Endothelial cell of umbilical vein (primary cell): ENCODE measurements at regions of chr3 and their contacts with region 1.

Region 1: DNA sequence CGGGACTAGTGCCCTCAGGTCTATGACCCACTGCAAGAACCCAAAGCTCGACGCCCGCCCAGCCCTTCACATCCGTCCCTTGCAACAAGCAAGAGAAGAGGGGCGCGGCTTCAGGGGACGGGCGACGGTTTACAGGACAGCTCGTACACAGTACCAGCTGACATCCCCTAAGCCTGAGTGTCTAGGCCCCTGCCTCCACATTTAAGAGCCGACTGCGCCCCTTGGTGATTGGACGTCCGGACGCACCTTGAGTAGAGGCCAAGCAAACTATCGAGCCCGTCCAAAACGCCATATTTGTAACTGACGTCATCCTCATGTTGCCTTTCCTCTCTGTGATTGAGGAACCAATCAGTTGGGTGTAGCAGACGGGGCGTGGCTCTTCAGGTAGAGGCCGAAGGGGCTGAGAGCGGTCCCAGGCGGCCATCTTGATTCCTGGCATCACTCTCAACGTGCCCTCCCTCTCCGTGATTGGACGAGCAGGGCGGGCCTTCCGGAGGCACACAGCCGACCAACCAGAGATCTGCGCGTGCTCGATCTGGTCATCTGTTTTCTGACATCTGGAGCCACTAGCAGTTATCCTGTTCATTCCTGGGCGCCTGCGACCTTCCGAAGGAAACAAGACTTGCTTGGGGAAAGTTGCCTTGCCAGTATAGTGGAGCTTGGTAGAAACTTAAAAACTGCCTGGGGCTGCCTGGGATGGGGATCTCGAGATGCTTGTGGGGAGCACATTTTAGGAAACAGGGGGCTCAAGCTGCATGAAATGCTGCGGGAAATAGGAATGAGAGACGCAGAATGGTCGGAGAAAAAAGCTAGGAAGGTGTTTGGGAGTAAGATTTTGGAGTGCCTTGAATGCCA is 4.0 kb upstream of the RPL14 start:
- DNase-seq: peak; percentile 99
- H3K4me3 ChIP-seq: peak overlapping the region; percentile 42 to 82 (median 73)
- H3K27ac ChIP-seq: peak overlapping the region; percentile 50
- H3K4me1 ChIP-seq: peaks cover 8% of the 10 kb centered on the region
- H3K27me3 ChIP-seq: no peaks in the 10 kb centered on the region
- CTCF ChIP-seq: no peak
- POLR2A ChIP-seq: peak; percentile 89

Region 2: DNA sequence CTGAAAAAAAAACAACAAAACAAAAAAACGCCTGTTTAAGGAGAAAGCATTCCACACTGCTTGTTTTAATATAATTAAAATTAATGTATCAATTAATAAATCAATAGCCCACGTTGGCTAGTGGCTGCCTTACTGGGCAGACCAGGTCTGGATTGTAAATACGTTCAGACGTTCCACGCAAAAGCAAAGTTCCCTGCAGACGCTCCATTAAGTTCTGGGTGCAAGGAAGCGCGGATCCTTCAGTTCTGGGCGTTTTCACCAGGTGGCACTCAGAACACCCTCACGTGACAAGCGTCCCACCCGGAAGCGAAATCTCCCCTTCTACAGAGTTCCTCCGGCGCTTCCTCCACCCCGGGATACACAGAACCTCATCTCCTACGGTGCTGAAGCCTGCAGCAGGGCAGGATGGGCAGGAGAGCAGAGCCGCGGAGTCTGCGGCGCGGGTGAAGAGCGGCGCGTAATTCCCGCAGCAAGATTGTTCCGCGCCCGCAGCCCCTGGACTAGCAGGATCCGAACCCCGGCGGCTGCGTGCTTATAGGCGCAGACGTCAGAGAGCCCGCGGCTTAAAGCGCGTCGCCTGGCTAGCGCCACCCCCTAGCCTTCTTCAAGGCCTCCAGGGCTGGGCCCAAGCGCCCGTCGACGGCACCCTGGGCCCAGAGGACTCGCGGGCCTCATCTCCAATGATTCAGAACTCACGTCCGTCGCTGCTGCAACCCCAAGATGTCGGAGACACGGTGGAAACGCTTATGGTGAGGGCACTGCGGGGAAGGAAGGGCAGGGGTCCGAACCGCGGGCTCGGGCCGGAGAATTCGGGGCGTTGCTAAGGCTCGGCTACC is 1069.8 kb before region 1 on chr3 and contains the start of gene SLC25A38:
- CTCF ChIA-PET with region 1: no interaction called
- POLR2A ChIA-PET with region 1: no interaction called
- dilution Hi-C with region 1: no loop called
- intact Hi-C with region 1: loop called (anchors 10 kb)
- DNase-seq: peak; percentile 86
- H3K4me3 ChIP-seq: peak within 1 kb of the TSS; percentile 58 to 79 (median 70)
- H3K27ac ChIP-seq: peak within 1 kb of the TSS; percentile 54
- H3K4me1 ChIP-seq: peaks cover 8% of the 10 kb centered on the region
- H3K27me3 ChIP-seq: no peaks in the 10 kb centered on the region
- CTCF ChIP-seq: peak in 1 of 2 donors; percentile 24
- POLR2A ChIP-seq: peak; percentile 71
- total RNA-seq, gene SLC25A38: 16.0 and 20.0 TPM in 2 replicates

Region 3: DNA sequence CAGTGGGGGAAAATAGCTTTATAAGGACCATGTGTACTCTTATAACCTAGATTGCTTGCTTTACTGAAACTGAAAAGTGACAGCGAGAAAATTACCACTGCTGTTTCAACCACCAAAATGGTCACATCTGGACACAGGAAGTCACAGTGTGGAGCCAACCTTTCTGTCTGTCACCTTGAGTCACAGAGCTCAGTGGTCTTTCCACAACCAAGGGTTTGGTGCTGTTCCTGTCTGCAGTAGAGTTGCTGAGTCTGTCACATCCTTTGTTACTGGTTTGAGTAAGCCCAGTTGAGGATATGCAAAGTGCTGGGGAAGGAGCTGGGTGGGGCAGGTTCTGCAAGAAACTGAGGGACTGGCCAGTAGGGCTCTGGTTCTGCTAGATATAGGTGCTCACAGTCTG is 282.7 kb before region 1 on chr3:
- CTCF ChIA-PET with region 1: no interaction called
- POLR2A ChIA-PET with region 1: no interaction called
- dilution Hi-C with region 1: no loop called
- intact Hi-C with region 1: no loop called
- DNase-seq: no peak
- H3K4me3 ChIP-seq: no peak overlapping the region
- H3K27ac ChIP-seq: no peak overlapping the region
- H3K4me1 ChIP-seq: no peaks in the 10 kb centered on the region
- H3K27me3 ChIP-seq: no peaks in the 10 kb centered on the region
- CTCF ChIP-seq: no peak
- POLR2A ChIP-seq: no peak

Region 4: GRCh38 chr3:40191850-40192448 is 261.2 kb before region 1 on chr3:
- CTCF ChIA-PET with region 1: no interaction called
- POLR2A ChIA-PET with region 1: no interaction called
- dilution Hi-C with region 1: no loop called
- intact Hi-C with region 1: loop called (anchors 1 kb)
- DNase-seq: peak; percentile 63
- H3K4me3 ChIP-seq: no peak overlapping the region
- H3K27ac ChIP-seq: no peak overlapping the region
- H3K4me1 ChIP-seq: no peaks in the 10 kb centered on the region
- H3K27me3 ChIP-seq: no peaks in the 10 kb centered on the region
- CTCF ChIP-seq: peak; percentile 76 to 88
- POLR2A ChIP-seq: no peak

Region 5: DNA sequence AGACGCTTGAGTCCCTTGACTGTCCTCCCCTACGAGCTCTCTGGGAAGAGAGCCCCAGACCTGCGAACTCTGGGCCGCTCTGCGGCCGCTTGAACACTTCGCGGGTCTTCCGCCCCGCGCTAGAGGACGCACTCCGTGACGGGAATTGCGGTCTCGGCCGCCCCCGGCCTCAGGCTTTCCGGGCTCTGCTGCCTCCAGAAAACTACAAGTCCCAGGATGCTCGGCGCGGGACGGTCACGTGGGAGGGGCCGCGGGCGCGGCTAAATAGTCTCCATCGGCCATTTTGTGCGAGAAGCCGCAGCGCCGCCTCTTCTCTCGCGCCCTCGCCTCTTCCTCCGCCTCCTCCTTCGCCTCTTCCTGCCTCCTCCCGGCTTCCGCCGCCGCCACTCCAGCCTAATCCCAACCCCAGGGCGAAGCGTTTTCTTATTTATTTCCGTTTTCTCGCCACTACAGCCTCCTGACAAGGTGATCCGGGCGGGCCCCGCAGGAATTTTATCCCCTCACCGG is 143.6 kb before region 1 on chr3 and contains the start of gene EIF1B:
- CTCF ChIA-PET with region 1: no interaction called
- POLR2A ChIA-PET with region 1: no interaction called
- dilution Hi-C with region 1: no loop called
- intact Hi-C with region 1: loop called (anchors 1 kb)
- DNase-seq: peak; percentile 99
- H3K4me3 ChIP-seq: peak within 1 kb of the TSS; percentile 85 to 100 (median 98)
- H3K27ac ChIP-seq: peak within 1 kb of the TSS; percentile 93
- H3K4me1 ChIP-seq: peaks cover 14% of the 10 kb centered on the region
- H3K27me3 ChIP-seq: no peaks in the 10 kb centered on the region
- CTCF ChIP-seq: peak; percentile 96 to 97
- POLR2A ChIP-seq: peak; percentile 96
- total RNA-seq, gene EIF1B: 44.1 and 46.0 TPM in 2 replicates

Region 6: DNA sequence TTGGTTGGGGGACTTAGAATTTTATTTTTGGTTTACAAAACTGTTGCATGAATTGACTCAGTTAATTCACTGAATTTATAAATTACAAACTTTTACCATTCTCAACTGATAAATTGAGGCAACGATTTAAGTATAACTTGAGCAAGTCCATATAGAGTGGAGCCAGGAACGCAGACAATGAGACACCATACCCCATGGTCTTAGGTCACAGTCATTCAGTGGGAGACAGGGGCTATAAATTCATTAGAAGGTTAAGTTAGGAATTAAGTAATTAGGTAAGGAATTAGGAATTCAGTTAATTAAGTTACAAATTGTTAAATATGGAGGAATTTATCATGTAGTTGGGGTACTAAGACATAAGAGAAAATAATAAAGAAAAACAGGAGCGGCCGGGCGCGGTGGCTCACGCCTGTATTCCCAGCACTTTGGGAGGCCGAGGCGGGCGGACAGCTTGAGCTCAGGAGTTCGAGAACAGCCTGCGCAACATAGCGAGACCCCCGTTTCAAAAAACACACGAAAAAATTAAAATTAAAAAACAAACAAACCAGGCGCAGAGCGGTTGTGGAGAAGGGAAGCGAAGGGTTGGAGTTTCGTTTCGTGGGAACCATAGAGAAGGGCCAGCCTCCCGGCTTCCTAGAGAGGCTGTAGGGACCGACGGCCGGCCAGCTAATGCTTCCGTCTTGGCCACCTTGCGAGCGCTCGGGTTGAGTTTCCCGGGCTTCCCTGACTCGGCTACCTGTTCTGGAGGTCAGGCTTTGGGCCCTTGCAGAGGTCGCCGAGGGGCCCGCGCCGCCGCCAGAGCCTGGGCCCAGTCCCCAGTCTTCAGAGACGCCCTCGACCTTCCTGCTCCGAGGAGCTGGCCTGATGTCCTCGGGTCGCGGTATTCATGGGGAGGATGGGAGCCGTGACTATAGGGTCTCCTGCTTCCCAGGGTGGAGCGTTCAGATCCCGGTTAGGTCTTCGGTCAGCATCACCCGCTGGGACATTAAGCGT is 23.7 kb after region 1 on chr3 and contains the start of gene ZNF619:
- CTCF ChIA-PET with region 1: interaction called, 3 read pairs
- POLR2A ChIA-PET with region 1: interaction called, 8 read pairs
- dilution Hi-C with region 1: no loop called
- intact Hi-C with region 1: loop called (anchors 1 kb)
- DNase-seq: peak; percentile 77
- H3K4me3 ChIP-seq: peak within 1 kb of the TSS; percentile 50 to 78 (median 71)
- H3K27ac ChIP-seq: peak within 1 kb of the TSS; percentile 68
- H3K4me1 ChIP-seq: peaks cover 7% of the 10 kb centered on the region
- H3K27me3 ChIP-seq: no peaks in the 10 kb centered on the region
- CTCF ChIP-seq: no peak
- POLR2A ChIP-seq: peak; percentile 84
- total RNA-seq, gene ZNF619: 4.4 and 7.2 TPM in 2 replicates

Region 7: GRCh38 chr3:40505599-40506462 is 52.7 kb after region 1 on chr3 and contains the start of gene ZNF620:
- CTCF ChIA-PET with region 1: interaction called, 7 read pairs
- POLR2A ChIA-PET with region 1: interaction called, 19 read pairs
- dilution Hi-C with region 1: no loop called
- intact Hi-C with region 1: loop called (anchors 1 kb)
- DNase-seq: peak; percentile 88
- H3K4me3 ChIP-seq: peak within 1 kb of the TSS; percentile 66 to 78 (median 76)
- H3K27ac ChIP-seq: peak within 1 kb of the TSS; percentile 96
- H3K4me1 ChIP-seq: peaks cover 19% of the 10 kb centered on the region
- H3K27me3 ChIP-seq: no peaks in the 10 kb centered on the region
- CTCF ChIP-seq: peak; percentile 34 to 51
- POLR2A ChIP-seq: no peak
- total RNA-seq, gene ZNF620: 3.6 and 4.0 TPM in 2 replicates

Region 8: DNA sequence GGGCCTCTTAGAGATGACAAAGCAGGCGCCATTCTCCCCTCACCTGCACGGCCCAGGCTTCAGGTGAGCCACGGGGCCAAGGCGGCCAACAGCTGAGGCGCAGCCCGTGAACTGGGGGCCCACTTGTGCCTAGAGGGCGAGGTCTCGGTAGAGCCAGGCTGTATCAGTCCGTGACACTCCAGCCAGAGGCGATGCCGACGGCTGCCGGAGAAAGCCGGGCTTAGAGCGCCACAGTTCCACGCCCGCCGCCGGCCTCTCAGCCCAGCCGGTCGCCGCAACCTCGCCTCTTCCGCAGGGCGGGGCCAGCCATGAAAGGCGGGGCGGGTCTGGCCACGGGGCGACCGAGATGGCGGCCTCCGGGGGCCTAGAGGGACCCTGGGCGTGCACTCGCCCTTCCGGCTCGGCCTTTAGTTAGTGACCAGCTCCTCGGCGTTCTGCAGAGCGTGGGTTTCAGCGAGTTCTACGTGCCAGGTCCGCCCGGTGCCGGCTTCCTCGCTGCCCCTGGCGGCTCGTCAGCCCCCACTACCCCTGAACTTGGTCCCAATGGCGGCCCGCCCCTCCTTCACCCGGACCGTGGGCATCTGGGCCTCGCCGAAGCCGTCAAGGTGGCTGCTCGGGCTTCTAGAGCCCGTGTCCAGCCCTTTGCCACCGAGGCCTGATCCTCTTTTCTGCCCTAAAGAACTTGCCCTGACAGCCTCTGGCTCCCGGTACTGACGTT is 71.6 kb after region 1 on chr3 and contains the start of gene ZNF621:
- CTCF ChIA-PET with region 1: interaction called, 4 read pairs
- POLR2A ChIA-PET with region 1: interaction called, 9 read pairs
- dilution Hi-C with region 1: no loop called
- intact Hi-C with region 1: loop called (anchors 1 kb)
- DNase-seq: peak; percentile 87
- H3K4me3 ChIP-seq: peak within 1 kb of the TSS; percentile 69 to 91 (median 84)
- H3K27ac ChIP-seq: peak within 1 kb of the TSS; percentile 71
- H3K4me1 ChIP-seq: peaks cover 14% of the 10 kb centered on the region
- H3K27me3 ChIP-seq: no peaks in the 10 kb centered on the region
- CTCF ChIP-seq: no peak
- POLR2A ChIP-seq: peak; percentile 94
- total RNA-seq, gene ZNF621: 20.6 and 22.5 TPM in 2 replicates

Region 9: GRCh38 chr3:40736943-40737342 is 283.8 kb after region 1 on chr3:
- CTCF ChIA-PET with region 1: no interaction called
- POLR2A ChIA-PET with region 1: no interaction called
- dilution Hi-C with region 1: no loop called
- intact Hi-C with region 1: no loop called
- DNase-seq: no peak
- H3K4me3 ChIP-seq: no peak overlapping the region
- H3K27ac ChIP-seq: no peak overlapping the region
- H3K4me1 ChIP-seq: no peaks in the 10 kb centered on the region
- H3K27me3 ChIP-seq: no peaks in the 10 kb centered on the region
- CTCF ChIP-seq: no peak
- POLR2A ChIP-seq: no peak